Spleen (tissue), 13 donors: ENCODE measurements at regions of chr2 and their contacts with region 1.

Region 1: GRCh38 chr2:187594801-187595200 is 40.6 kb upstream of the TFPI start:
- DNase-seq: no peak
- H3K4me3 ChIP-seq: no peak overlapping the region
- H3K27ac ChIP-seq: no peak overlapping the region
- H3K4me1 ChIP-seq: no peaks in the 10 kb centered on the region
- H3K27me3 ChIP-seq: no peaks in the 10 kb centered on the region
- CTCF ChIP-seq: no peak
- POLR2A ChIP-seq: no peak

Region 2: GRCh38 chr2:187263675-187264560 is 330.9 kb before region 1 on chr2:
- intact Hi-C with region 1: no loop called
- DNase-seq: no peak
- H3K4me3 ChIP-seq: no peak overlapping the region
- H3K27ac ChIP-seq: peak overlapping the region in 5 of 8 donors; percentile 15 to 69 (median 40)
- H3K4me1 ChIP-seq: no peaks in the 10 kb centered on the region
- H3K27me3 ChIP-seq: no peaks in the 10 kb centered on the region
- CTCF ChIP-seq: no peak
- POLR2A ChIP-seq: no peak

Region 3: GRCh38 chr2:187838690-187839089 is 243.9 kb after region 1 on chr2:
- intact Hi-C with region 1: loop called (anchors 10 kb)
- DNase-seq: no peak
- H3K4me3 ChIP-seq: no peak overlapping the region
- H3K27ac ChIP-seq: no peak overlapping the region
- H3K4me1 ChIP-seq: no peaks in the 10 kb centered on the region
- H3K27me3 ChIP-seq: no peaks in the 10 kb centered on the region
- CTCF ChIP-seq: no peak
- POLR2A ChIP-seq: no peak